ENCODE measurements at regions of chr17 and their contacts with region 1.

Region 1: DNA sequence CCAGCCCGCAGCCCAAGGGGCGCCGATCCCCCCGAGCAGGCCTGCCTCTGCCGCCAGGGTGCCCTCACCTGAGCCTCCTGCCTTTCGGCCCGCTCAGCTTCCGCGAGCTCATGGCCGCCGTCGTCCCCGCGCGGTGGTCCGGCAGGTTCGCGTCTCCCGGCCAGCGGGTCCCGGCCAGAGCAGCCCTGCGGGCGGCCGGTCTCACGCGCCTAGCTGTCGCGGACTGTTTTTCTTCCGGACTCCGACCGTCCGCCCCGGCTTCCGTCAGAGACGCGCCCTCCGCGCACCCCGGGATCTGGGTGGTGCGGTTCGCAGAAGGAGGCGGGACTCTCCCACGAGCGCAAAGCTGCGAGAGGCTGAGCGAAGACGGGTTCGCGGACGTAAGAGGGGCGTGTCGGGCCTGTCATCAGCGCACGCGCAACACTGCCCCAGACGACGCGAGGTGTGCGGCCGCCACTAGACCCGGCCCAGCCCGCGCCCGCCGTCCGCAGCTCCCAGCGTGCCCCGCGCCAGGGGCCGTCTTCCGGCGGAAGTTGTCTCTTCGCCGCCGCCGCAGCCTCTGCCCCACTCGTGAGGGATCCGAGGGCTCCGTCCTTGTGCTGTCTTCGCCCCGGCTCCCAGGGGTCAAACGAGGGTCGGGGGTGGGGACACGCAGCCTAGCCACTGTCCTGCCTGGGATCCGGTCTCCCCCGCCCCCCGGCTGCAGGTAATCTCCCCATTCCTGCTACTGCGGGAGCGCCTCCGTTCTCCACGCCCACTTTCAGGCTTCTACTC is at the start of gene INPP5K:
- DNase-seq: peak; percentile 98
- ATAC-seq: peak; percentile 96
- H3K4me3 Mint-ChIP-seq: peak within 1 kb of the TSS; percentile 89
- H3K27ac Mint-ChIP-seq: peak within 1 kb of the TSS; percentile 85
- H3K4me1 Mint-ChIP-seq: peaks cover 24% of the 10 kb centered on the region
- H3K27me3 Mint-ChIP-seq: no peaks in the 10 kb centered on the region
- total RNA-seq, gene INPP5K: 56.7 to 58.7 TPM

Region 2: DNA sequence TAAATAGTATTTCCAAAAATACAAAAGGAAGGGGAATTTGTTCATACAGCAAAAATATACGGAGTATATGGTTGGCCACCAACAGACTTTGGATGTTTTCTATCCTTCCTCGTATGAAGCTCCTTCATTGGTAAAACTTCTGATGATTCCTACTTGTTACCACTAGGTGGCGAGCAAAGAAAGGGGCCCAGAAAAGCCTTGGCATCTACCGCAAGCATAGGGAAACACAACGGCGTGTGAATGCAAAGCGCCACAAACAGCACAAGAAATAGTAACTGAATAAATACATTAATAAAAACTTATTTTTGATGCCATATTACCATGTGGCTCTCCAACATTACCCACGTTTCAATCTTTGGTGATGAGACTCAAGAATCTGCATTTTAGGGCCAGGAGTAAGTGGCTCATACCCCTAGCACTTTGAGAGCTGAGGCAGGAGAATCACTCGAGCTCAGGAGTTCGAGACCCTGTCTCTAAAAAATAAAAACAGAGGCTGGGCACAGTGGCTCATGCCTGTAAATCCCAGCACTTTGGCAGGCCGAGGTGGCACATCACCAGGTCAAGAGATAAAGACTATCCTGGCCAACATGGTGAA is 151.0 kb before region 1 on chr17:
- POLR2A ChIA-PET with region 1: interaction called, 22 read pairs
- DNase-seq: no peak
- ATAC-seq: peak; percentile 53
- H3K4me3 Mint-ChIP-seq: no peak overlapping the region
- H3K27ac Mint-ChIP-seq: peak overlapping the region; percentile 27
- H3K4me1 Mint-ChIP-seq: peaks cover 30% of the 10 kb centered on the region
- H3K27me3 Mint-ChIP-seq: no peaks in the 10 kb centered on the region

Region 3: GRCh38 chr17:1455797-1456599 is 60.6 kb before region 1 on chr17 and contains the start of gene CRK:
- POLR2A ChIA-PET with region 1: interaction called, 12 read pairs
- DNase-seq: peak; percentile 100
- ATAC-seq: peak; percentile 96
- H3K4me3 Mint-ChIP-seq: peak within 1 kb of the TSS; percentile 88
- H3K27ac Mint-ChIP-seq: peak within 1 kb of the TSS; percentile 79
- H3K4me1 Mint-ChIP-seq: peaks cover 25% of the 10 kb centered on the region
- H3K27me3 Mint-ChIP-seq: peaks cover 28% of the 10 kb centered on the region
- total RNA-seq, gene CRK: 19.5 to 21.9 TPM

Region 4: DNA sequence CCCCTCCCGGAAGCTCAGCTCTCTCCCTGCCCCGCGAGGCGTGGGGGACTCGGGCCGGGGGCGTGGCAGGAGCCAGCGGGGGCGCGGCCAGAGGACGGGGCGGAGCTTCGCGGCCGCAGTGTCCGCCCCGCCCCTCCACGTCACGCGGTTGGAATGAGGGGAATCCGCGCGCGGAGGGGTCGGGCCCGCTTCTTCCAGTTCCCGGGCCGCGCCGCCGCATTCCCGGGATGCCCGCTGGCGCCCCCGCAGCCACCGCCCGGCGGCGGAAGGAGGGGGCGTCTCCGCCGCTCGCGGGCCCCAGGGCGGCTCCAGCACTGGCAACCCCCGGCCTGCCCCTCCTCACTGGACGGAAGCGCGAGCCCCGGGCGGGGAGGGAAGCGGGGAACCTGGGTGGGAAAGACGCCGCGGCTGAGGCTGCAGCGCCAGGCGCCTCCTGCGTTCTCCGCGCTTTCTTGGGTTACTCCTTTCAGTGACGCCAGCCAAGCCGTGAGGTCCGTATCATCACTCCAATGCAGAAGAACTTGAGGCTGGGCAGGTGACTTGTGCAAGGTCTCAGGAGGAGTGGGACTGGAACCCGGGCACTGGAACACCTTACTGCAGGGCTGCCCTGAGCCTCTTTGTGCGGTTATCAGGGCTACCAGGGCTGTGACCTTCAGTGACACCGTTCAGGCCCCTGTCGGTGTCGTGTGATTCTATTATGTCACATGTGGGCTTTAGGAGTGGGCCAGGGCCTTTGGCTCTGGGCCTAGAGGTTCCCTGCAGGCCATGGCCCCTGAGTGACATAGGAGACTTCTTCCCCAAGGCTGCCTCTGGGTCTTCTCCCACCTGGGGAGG is 28.3 kb before region 1 on chr17:
- POLR2A ChIA-PET with region 1: interaction called, 10 read pairs
- DNase-seq: peak; percentile 87
- ATAC-seq: peak; percentile 11
- H3K4me3 Mint-ChIP-seq: peak overlapping the region; percentile 84
- H3K27ac Mint-ChIP-seq: peak overlapping the region; percentile 51
- H3K4me1 Mint-ChIP-seq: peaks cover 17% of the 10 kb centered on the region
- H3K27me3 Mint-ChIP-seq: peaks cover 7% of the 10 kb centered on the region